Posterior cingulate gyrus (tissue), 11 donors: ENCODE measurements at regions of chr19 and their contacts with region 1.

Region 1: DNA sequence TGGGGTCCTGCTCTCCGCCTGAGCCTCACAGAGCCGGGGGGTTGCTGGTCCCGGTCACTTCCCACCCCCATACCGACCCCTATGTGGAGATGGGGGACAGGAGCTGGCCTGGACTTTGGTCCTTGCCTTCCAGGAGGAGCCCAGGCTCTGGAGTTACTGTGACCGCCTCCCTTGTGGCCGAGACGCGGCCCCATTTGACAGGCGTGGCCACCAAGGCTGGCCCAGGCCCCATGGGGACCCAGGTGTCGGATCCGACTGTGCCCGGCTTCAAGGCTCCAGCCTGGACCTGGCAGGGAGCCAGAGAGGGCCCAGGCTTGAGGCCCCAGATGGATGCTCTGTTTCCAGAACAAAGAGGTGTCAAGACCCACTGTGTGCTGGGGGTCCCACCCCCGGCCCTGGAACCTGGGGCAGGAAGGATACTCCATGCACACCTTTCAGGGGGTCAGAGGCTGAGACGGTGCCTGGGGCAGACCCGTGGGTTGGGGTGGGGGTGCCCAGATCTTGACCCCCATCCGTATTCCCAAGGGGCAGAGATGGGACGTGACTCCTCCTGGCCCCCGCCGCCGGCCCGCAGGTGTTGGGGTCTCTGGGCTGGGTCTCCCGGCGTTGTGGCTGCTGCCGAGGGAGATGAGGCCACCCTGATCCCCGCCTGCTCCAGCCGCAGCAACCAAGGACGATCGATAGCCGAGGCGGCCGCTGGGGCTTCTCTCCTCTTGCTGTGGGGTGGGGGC is 47.8 kb upstream of the TCF3 start:
- DNase-seq: peak in 1 of 10 donors; percentile 73

Region 2: GRCh38 chr19:1173845-1174809 is 526.0 kb before region 1 on chr19 and contains the start of gene SBNO2:
- intact Hi-C with region 1: no loop called
- DNase-seq: peak; percentile 68 to 98 (median 81)

Region 3: DNA sequence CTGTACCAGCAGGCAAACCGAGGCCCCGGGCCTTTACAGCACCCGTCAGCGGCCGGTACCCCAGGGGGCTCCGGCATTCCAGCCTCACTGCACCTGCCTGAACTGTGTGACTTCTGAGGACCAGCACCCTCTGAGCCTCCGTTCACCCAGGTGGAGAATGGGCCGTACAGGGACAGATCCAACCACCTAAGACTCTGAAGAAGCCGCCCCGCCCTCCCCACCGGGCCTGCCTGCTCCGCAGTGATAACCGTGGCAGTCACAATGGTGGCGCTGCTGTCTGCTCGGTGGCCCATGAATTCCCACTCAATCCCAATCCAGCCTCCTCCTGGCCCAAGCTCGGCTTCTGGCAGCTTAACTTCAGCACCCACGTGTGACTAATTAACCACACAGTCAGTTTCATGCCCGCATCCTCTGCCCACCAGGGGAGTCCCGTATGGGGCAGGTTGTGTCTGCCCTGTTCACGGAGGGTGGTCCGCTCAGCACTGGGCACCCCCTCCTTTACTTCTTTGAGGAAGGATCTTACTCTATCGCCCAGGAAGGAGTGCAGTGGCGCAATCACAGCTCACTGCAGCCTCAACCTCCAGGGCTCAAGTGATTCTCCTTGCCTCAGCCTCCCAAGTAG is 51.1 kb before region 1 on chr19:
- intact Hi-C with region 1: no loop called
- DNase-seq: no peak

Region 4: DNA sequence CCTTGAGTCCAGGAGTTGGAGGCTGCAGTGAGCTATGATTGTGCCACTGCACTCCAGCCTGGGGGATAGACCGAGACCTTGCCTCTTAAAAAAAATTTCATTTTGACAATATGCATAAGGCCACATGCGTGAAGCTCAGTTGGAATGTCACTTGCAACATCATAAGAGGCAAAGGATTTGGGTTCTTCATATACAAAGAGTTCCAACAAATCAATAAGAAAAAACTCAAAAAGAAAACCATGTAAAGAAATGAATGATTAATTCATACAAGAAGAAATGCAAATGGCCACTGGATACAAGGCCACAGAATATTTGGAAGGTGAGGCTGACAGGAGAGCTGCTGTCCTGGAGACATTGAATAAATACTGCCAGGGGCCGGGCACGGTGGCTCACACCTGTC is 38.2 kb before region 1 on chr19:
- intact Hi-C with region 1: loop called (anchors 2 kb)
- DNase-seq: no peak

Region 5: GRCh38 chr19:1780272-1780958 is 80.2 kb after region 1 on chr19:
- intact Hi-C with region 1: no loop called
- DNase-seq: no peak